CD8-positive, alpha-beta T cell (primary cell): ENCODE measurements at regions of chr6 and their contacts with region 1.

Region 1: DNA sequence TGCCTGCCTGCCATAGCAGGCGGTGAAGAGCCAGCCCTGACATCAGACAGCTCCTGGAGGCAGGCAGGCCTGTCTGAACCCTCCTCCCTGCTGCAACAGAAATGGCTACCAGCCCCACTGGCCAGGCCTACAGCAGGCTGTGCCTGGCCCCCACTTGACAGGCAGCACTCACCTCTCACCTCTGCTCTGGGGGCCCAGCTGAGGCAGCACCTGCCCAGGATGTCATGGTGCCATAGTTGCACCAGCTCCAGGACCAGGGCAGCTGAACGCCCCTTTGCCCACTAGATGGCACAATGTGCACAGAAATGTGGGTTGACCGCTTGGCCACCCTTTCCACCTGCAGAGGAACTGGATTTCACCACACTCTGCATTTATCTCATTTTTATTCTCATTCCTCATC is 30.6 kb downstream of the MRPL14 start:
- DNase-seq: peak; percentile 61 to 86 (median 77)
- ATAC-seq: peak; percentile 97
- H3K4me3 ChIP-seq: no peak overlapping the region
- H3K4me3 Mint-ChIP-seq: no peak overlapping the region
- H3K27ac ChIP-seq: no peak overlapping the region
- H3K27ac Mint-ChIP-seq: no peak overlapping the region
- H3K4me1 ChIP-seq: no peaks in the 10 kb centered on the region
- H3K4me1 Mint-ChIP-seq: peaks cover 3% of the 10 kb centered on the region
- H3K27me3 ChIP-seq: no peaks in the 10 kb centered on the region
- H3K27me3 Mint-ChIP-seq: no peaks in the 10 kb centered on the region
- CTCF ChIP-seq: peak; percentile 84

Region 2: DNA sequence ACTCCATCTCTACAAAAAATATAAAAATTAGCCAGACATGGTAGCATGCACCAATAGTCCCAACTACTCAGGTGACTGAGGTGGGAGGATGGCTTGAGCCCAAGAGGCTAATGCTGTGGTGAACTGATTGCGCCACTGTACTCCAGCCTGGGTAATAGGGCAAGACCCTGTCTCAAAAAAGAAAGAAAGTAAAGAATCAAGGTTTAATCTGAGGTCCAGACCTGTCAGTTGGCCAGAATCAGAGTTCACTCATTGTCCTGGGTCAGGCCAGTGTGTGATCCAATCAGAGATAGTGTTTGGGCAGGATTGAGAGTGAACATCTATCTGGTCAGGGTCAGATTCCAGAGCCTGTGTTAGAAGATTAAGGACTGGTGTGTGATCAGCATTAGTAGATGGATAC is 46.2 kb after region 1 on chr6:
- CTCF ChIA-PET with region 1: interaction called, 17 read pairs
- POLR2A ChIA-PET with region 1: no interaction called
- intact Hi-C with region 1: no loop called
- DNase-seq: no peak
- ATAC-seq: no peak
- H3K4me3 ChIP-seq: no peak overlapping the region
- H3K4me3 Mint-ChIP-seq: no peak overlapping the region
- H3K27ac ChIP-seq: no peak overlapping the region
- H3K27ac Mint-ChIP-seq: peak overlapping the region; percentile 9
- H3K4me1 ChIP-seq: no peaks in the 10 kb centered on the region
- H3K4me1 Mint-ChIP-seq: no peaks in the 10 kb centered on the region
- H3K27me3 ChIP-seq: no peaks in the 10 kb centered on the region
- H3K27me3 Mint-ChIP-seq: no peaks in the 10 kb centered on the region
- CTCF ChIP-seq: no peak

Region 3: DNA sequence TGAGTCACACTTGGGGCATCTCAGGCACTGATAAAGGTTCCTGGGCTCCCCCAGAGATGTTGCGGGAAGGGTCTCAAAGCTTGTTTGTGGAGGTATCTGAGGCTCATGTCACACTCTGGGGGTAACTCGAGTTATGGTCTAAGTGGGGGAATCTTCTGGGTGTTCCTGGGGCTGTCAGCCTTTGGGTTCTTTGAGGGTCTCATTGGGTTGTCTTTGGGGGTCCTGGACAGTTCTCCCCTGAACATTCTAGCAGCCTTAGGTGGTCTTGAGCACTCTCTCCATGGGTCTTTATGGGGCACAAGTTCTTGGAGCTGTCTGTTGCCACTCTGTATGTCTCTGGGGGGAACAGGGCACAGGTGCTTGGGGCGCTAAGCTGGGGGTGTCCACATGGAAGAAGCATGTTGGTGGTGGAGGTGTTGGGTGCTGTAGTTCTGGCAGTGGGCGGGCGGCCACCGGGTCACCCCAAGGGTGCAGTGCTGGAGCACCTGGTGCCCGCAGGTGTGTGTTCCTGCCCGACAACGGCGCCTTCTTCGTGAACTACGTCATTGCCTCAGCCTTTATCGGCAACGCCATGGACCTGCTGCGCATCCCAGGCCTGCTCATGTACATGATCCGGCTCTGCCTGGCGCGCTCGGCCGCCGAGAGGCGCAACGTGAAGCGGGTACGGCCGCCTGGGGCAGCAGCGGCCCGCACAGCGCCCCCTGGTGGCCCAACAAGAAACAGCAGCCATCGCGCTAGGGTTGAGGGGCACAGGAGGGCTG is 54.9 kb after region 1 on chr6:
- CTCF ChIA-PET with region 1: interaction called, 73 read pairs
- POLR2A ChIA-PET with region 1: no interaction called
- intact Hi-C with region 1: loop called (anchors 1 kb)
- DNase-seq: peak; percentile 63 to 88 (median 80)
- ATAC-seq: peak; percentile 93
- H3K4me3 ChIP-seq: peak overlapping the region in 1 of 2 experiments; percentile 20
- H3K4me3 Mint-ChIP-seq: no peak overlapping the region
- H3K27ac ChIP-seq: no peak overlapping the region
- H3K27ac Mint-ChIP-seq: no peak overlapping the region
- H3K4me1 ChIP-seq: peaks cover 8% of the 10 kb centered on the region
- H3K4me1 Mint-ChIP-seq: peaks cover 2% of the 10 kb centered on the region
- H3K27me3 ChIP-seq: no peaks in the 10 kb centered on the region
- H3K27me3 Mint-ChIP-seq: no peaks in the 10 kb centered on the region
- CTCF ChIP-seq: peak; percentile 99

Region 4: DNA sequence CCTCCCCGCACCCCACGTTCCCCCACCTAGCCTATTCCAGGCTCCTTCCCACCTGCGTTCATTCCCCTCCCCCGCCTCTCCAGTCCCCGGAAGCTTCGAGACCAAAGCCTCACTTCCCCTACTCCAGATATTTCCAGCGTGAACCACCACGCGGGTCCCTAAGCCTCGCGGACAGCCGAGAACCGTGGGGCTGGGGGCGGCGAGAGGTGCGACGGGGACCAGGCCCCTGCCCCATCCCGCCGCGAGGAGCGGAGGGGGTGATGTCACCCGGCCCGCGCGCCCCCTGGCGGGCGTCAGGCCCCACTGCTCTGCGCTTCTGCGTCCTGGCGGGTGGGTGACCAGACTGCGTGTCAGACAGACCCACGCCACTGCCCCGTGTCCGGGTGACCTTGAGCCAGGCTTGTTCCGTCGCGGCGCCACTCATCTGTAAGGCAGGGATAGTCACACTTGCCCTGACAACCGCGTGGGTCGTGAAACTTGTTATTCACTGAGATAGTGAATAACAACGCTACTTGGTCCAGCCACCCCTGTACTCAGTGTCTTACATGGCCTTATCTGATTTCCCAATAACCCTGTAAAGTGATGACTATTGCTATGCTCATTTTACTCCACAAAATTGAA is 141.3 kb after region 1 on chr6:
- CTCF ChIA-PET with region 1: interaction called, 6 read pairs
- POLR2A ChIA-PET with region 1: no interaction called
- intact Hi-C with region 1: loop called in 1 of 2 experiments (anchors 1 kb)
- DNase-seq: peak; percentile 62 to 89 (median 77)
- ATAC-seq: peak; percentile 91
- H3K4me3 ChIP-seq: peak overlapping the region; percentile 76 to 98
- H3K4me3 Mint-ChIP-seq: peak overlapping the region; percentile 88
- H3K27ac ChIP-seq: peak overlapping the region; percentile 88 to 95
- H3K27ac Mint-ChIP-seq: peak overlapping the region; percentile 93
- H3K4me1 ChIP-seq: peaks cover 12% of the 10 kb centered on the region
- H3K4me1 Mint-ChIP-seq: peaks cover 11% of the 10 kb centered on the region
- H3K27me3 ChIP-seq: no peaks in the 10 kb centered on the region
- H3K27me3 Mint-ChIP-seq: no peaks in the 10 kb centered on the region
- CTCF ChIP-seq: peak; percentile 93

Region 5: GRCh38 chr6:44338228-44339122 is 241.9 kb after region 1 on chr6:
- CTCF ChIA-PET with region 1: interaction called, 6 read pairs
- POLR2A ChIA-PET with region 1: no interaction called
- intact Hi-C with region 1: loop called in 1 of 2 experiments (anchors 1 kb)
- DNase-seq: peak; percentile 33 to 78 (median 63)
- ATAC-seq: peak; percentile 94
- H3K4me3 ChIP-seq: no peak overlapping the region
- H3K4me3 Mint-ChIP-seq: no peak overlapping the region
- H3K27ac ChIP-seq: no peak overlapping the region
- H3K27ac Mint-ChIP-seq: no peak overlapping the region
- H3K4me1 ChIP-seq: no peaks in the 10 kb centered on the region
- H3K4me1 Mint-ChIP-seq: no peaks in the 10 kb centered on the region
- H3K27me3 ChIP-seq: peaks cover 0 to 3% of the 10 kb centered on the region in 2 experiments
- H3K27me3 Mint-ChIP-seq: peaks cover 18% of the 10 kb centered on the region
- CTCF ChIP-seq: peak; percentile 78